HEK293 (cell line): ENCODE measurements at regions of chr9 and their contacts with region 1.

Region 1: GRCh38 chr9:2087500-2088313 is 72.6 kb downstream of the SMARCA2 start:
- H3K4me3 ChIP-seq: no peak overlapping the region
- H3K27ac ChIP-seq: no peak overlapping the region
- H3K4me1 ChIP-seq: no peaks in the 10 kb centered on the region
- CTCF ChIP-seq: no peak

Region 2: DNA sequence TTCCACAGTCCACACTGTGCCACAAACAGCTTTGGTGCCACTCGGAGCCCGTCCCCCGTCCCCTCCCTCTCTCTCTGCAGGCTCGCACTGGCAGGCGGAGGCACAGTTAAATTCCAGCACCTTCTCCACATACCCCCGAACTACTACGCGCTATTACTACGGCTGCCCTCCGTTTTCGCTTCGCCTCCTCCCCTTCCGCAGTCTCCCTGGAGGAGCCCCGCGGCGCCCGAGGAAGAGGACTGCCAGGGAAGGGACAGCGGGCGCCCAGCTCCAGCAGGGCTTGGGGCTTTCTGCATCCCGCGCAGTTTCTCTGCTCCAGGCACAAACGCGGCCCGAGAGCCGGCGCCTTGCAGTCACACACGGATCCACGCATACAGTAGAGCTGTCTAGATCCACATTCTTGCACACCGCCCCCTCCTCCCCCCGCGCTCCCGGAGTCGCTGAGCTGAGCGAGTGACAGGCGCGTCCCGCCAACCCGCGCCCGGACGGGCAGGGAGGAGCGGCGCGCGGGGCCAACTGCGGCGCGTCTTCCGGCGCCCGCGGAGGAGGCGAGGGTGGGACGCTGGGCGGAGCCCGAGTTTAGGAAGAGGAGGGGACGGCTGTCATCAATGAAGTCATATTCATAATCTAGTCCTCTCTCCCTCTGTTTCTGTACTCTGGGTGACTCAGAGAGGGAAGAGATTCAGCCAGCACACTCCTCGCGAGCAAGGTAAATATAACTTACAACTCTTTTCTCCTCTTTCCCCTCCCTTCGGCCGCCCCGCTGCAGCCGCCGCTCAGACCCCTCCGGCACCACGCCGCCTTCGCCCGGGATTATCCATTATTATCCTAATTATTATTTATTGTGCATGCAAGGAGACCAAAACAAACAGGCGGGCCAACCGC is 72.8 kb before region 1 on chr9 and contains the start of gene SMARCA2:
- CTCF ChIA-PET with region 1: interaction called, 13 read pairs
- POLR2A ChIA-PET with region 1: no interaction called
- H3K4me3 ChIP-seq: peak within 1 kb of the TSS; percentile 97
- H3K27ac ChIP-seq: peak within 1 kb of the TSS; percentile 79
- H3K4me1 ChIP-seq: peaks cover 4% of the 10 kb centered on the region
- CTCF ChIP-seq: no peak

Region 3: GRCh38 chr9:2107906-2108451 is 20.3 kb after region 1 on chr9:
- CTCF ChIA-PET with region 1: interaction called, 10 read pairs
- POLR2A ChIA-PET with region 1: no interaction called
- H3K4me3 ChIP-seq: no peak overlapping the region
- H3K27ac ChIP-seq: no peak overlapping the region
- H3K4me1 ChIP-seq: no peaks in the 10 kb centered on the region
- CTCF ChIP-seq: no peak